MCF 10A (cell line): ENCODE measurements at regions of chr17 and their contacts with region 1.

Region 1: GRCh38 chr17:53837131-53837530 is 14.4 kb downstream of the KIF2B start:
- DNase-seq: peak; percentile 2
- H3K4me3 Mint-ChIP-seq: no peak overlapping the region
- H3K27ac Mint-ChIP-seq: no peak overlapping the region
- H3K4me1 Mint-ChIP-seq: peaks cover 22% of the 10 kb centered on the region
- H3K27me3 Mint-ChIP-seq: no peaks in the 10 kb centered on the region
- CTCF ChIP-seq: no peak

Region 2: DNA sequence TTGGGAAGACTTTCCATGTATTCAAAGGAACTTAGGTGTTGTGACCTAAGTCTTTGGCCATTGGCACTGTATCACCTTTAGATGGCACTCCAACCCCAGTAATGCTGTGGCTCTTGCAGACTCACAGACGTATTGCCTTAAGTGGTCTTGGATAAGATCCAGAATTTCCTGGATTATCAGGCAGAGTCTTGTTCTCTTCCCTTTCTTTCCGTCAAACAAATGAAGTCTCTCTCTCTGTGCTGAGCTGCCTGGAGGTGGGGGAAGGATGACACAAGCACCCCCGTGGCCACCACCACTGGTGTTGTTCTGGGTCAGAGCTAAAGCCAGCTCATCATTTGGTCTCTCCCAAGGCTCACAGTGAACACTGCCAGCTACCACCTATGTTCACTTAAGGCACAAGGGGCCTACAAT is 804.3 kb before region 1 on chr17:
- CTCF ChIA-PET with region 1: interaction called, 3 read pairs
- POLR2A ChIA-PET with region 1: no interaction called
- intact Hi-C with region 1: loop called (anchors 1 kb)
- DNase-seq: peak; percentile 65
- H3K4me3 Mint-ChIP-seq: no peak overlapping the region
- H3K27ac Mint-ChIP-seq: no peak overlapping the region
- H3K4me1 Mint-ChIP-seq: no peaks in the 10 kb centered on the region
- H3K27me3 Mint-ChIP-seq: peaks cover 59% of the 10 kb centered on the region
- CTCF ChIP-seq: peak; percentile 74

Region 3: GRCh38 chr17:53150101-53150698 is 686.9 kb before region 1 on chr17:
- CTCF ChIA-PET with region 1: no interaction called
- POLR2A ChIA-PET with region 1: no interaction called
- intact Hi-C with region 1: loop called (anchors 5 kb)
- DNase-seq: peak; percentile 9
- H3K4me3 Mint-ChIP-seq: no peak overlapping the region
- H3K27ac Mint-ChIP-seq: no peak overlapping the region
- H3K4me1 Mint-ChIP-seq: no peaks in the 10 kb centered on the region
- H3K27me3 Mint-ChIP-seq: peaks cover 27% of the 10 kb centered on the region
- CTCF ChIP-seq: no peak

Region 4: GRCh38 chr17:53516636-53517035 is 320.5 kb before region 1 on chr17:
- CTCF ChIA-PET with region 1: interaction called, 4 read pairs
- POLR2A ChIA-PET with region 1: interaction called, 3 read pairs
- intact Hi-C with region 1: loop called (anchors 5 kb)
- DNase-seq: peak; percentile 35
- H3K4me3 Mint-ChIP-seq: no peak overlapping the region
- H3K27ac Mint-ChIP-seq: no peak overlapping the region
- H3K4me1 Mint-ChIP-seq: no peaks in the 10 kb centered on the region
- H3K27me3 Mint-ChIP-seq: no peaks in the 10 kb centered on the region
- CTCF ChIP-seq: peak; percentile 7

Region 5: DNA sequence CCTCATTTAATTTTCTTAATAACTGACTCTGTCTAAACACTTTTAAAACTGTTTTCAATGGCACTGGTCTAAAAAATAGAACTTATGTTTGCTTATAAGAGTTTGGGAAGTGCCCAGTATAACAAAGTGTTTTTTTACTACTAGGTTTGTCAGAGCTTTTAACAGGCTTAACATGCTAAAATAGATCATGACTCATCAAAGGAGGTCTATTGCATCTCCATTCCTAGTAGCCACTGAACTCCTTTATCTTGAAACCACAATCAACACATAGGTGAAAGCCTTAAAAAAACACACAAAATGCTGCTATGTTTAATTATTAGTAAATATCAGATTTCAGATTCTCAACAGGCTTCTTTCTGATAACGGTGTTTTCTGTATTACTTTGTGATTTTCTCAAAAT is 210.8 kb before region 1 on chr17:
- CTCF ChIA-PET with region 1: no interaction called
- POLR2A ChIA-PET with region 1: interaction called, 4 read pairs
- intact Hi-C with region 1: loop called (anchors 5 kb)
- DNase-seq: peak; percentile 59
- H3K4me3 Mint-ChIP-seq: no peak overlapping the region
- H3K27ac Mint-ChIP-seq: no peak overlapping the region
- H3K4me1 Mint-ChIP-seq: peaks cover 12% of the 10 kb centered on the region
- H3K27me3 Mint-ChIP-seq: no peaks in the 10 kb centered on the region
- CTCF ChIP-seq: no peak

Region 6: GRCh38 chr17:53804437-53804836 is 32.7 kb before region 1 on chr17:
- CTCF ChIA-PET with region 1: no interaction called
- POLR2A ChIA-PET with region 1: no interaction called
- intact Hi-C with region 1: no loop called
- DNase-seq: no peak
- H3K4me3 Mint-ChIP-seq: no peak overlapping the region
- H3K27ac Mint-ChIP-seq: no peak overlapping the region
- H3K4me1 Mint-ChIP-seq: no peaks in the 10 kb centered on the region
- H3K27me3 Mint-ChIP-seq: no peaks in the 10 kb centered on the region
- CTCF ChIP-seq: no peak

Region 7: GRCh38 chr17:54426296-54426886 is 589.3 kb after region 1 on chr17:
- CTCF ChIA-PET with region 1: no interaction called
- POLR2A ChIA-PET with region 1: no interaction called
- intact Hi-C with region 1: loop called (anchors 2 kb)
- DNase-seq: peak; percentile 24
- H3K4me3 Mint-ChIP-seq: no peak overlapping the region
- H3K27ac Mint-ChIP-seq: no peak overlapping the region
- H3K4me1 Mint-ChIP-seq: no peaks in the 10 kb centered on the region
- H3K27me3 Mint-ChIP-seq: no peaks in the 10 kb centered on the region
- CTCF ChIP-seq: peak; percentile 60

Region 8: GRCh38 chr17:54891176-54891821 is 1054.2 kb after region 1 on chr17:
- CTCF ChIA-PET with region 1: interaction called, 3 read pairs
- POLR2A ChIA-PET with region 1: no interaction called
- intact Hi-C with region 1: loop called (anchors 10 kb)
- DNase-seq: peak; percentile 70
- H3K4me3 Mint-ChIP-seq: no peak overlapping the region
- H3K27ac Mint-ChIP-seq: no peak overlapping the region
- H3K4me1 Mint-ChIP-seq: peaks cover 5% of the 10 kb centered on the region
- H3K27me3 Mint-ChIP-seq: no peaks in the 10 kb centered on the region
- CTCF ChIP-seq: peak; percentile 52